ENCODE measurements at regions of chr16 and their contacts with region 1.

Region 1: GRCh38 chr16:10828851-10829731 is 10.5 kb upstream of the TVP23A start:
- DNase-seq: peak; percentile 96 to 98 (median 96)
- ATAC-seq: peak; percentile 67 to 84 (median 78)
- H3K4me3 ChIP-seq: peak overlapping the region in 1 of 4 donors; percentile 1
- H3K27ac ChIP-seq: peak overlapping the region; percentile 56 to 92 (median 85)
- H3K4me1 ChIP-seq: peaks cover 29 to 51% (median 50%) of the 10 kb centered on the region in 3 donors
- H3K27me3 ChIP-seq: no peaks in the 10 kb centered on the region
- CTCF ChIP-seq: no peak

Region 2: DNA sequence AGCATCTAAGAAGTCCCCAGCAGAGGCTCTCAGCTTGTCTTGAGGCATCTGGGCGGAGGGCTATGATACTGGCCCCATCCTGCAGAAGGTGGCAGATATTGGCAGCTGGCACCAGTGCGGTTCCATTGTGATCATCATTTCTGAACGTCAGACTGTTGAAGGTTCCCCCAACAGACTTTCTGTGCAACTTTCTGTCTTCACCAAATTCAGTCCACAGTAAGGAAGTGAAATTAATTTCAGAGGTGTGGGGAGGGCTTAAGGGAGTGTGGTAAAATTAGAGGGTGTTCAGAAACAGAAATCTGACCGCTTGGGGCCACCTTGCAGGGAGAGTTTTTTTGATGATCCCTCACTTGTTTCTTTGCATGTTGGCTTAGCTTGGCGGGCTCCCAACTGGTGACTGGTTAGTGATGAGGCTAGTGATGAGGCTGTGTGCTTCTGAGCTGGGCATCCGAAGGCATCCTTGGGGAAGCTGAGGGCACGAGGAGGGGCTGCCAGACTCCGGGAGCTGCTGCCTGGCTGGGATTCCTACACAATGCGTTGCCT is 47.8 kb after region 1 on chr16 and contains the start of gene CIITA:
- intact Hi-C with region 1: loop called in 1 of 3 experiments (anchors 5 kb)
- DNase-seq: peak; percentile 49 to 79 (median 68)
- ATAC-seq: peak in 3 of 4 donors; percentile 42 to 71 (median 58)
- H3K4me3 ChIP-seq: peak within 1 kb of the TSS in 1 of 4 donors; percentile 61
- H3K27ac ChIP-seq: peak within 1 kb of the TSS in 1 of 4 donors; percentile 77
- H3K4me1 ChIP-seq: peaks cover 3 to 14% (median 5%) of the 10 kb centered on the region in 3 donors
- H3K27me3 ChIP-seq: no peaks in the 10 kb centered on the region
- CTCF ChIP-seq: no peak
- total RNA-seq, gene CIITA: 1.8 to 39.7 (median 3.7) TPM

Region 3: GRCh38 chr16:11168386-11169051 is 339.4 kb after region 1 on chr16:
- intact Hi-C with region 1: no loop called
- DNase-seq: no peak
- ATAC-seq: no peak
- H3K4me3 ChIP-seq: no peak overlapping the region
- H3K27ac ChIP-seq: no peak overlapping the region
- H3K4me1 ChIP-seq: no peaks in the 10 kb centered on the region
- H3K27me3 ChIP-seq: no peaks in the 10 kb centered on the region
- CTCF ChIP-seq: no peak

Measured in pancreas (tissue), 10 donors.